ENCODE measurements at regions of chr11 and their contacts with region 1.

Region 1: GRCh38 chr11:101043940-101044339 is 85.7 kb downstream of the PGR start:
- DNase-seq: no peak
- H3K4me3 ChIP-seq: no peak overlapping the region
- H3K4me3 Mint-ChIP-seq: no peak overlapping the region
- H3K27ac ChIP-seq: no peak overlapping the region
- H3K27ac Mint-ChIP-seq: no peak overlapping the region
- H3K4me1 ChIP-seq: no peaks in the 10 kb centered on the region
- H3K4me1 Mint-ChIP-seq: no peaks in the 10 kb centered on the region
- H3K27me3 ChIP-seq: no peaks in the 10 kb centered on the region
- H3K27me3 Mint-ChIP-seq: no peaks in the 10 kb centered on the region

Region 2: GRCh38 chr11:100984668-100985067 is 59.3 kb before region 1 on chr11:
- CTCF ChIA-PET with region 1: no interaction called
- POLR2A ChIA-PET with region 1: interaction called, 12 read pairs
- DNase-seq: no peak
- H3K4me3 ChIP-seq: no peak overlapping the region
- H3K4me3 Mint-ChIP-seq: no peak overlapping the region
- H3K27ac ChIP-seq: no peak overlapping the region
- H3K27ac Mint-ChIP-seq: no peak overlapping the region
- H3K4me1 ChIP-seq: no peaks in the 10 kb centered on the region
- H3K4me1 Mint-ChIP-seq: no peaks in the 10 kb centered on the region
- H3K27me3 ChIP-seq: no peaks in the 10 kb centered on the region
- H3K27me3 Mint-ChIP-seq: no peaks in the 10 kb centered on the region

Region 3: DNA sequence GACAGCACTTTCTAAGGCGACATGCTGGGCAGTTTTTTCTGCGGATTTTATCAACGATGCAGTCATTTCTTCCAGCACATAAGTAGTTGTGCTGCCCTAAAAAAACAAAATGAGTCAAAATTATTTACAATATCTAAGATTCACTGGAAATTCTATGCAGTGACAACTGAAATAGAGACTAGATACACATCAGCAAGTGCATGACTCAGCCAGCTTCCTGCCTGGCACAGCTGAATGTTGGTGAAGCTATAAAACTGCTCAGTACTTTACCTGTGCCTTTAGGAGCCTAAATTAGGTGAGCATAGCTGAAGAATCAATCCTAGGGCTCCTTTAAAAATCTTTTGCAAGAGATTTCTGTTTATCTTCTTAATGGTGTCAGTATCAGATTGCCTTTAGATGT is 47.8 kb after region 1 on chr11:
- CTCF ChIA-PET with region 1: no interaction called
- POLR2A ChIA-PET with region 1: no interaction called
- DNase-seq: no peak
- H3K4me3 ChIP-seq: no peak overlapping the region
- H3K4me3 Mint-ChIP-seq: no peak overlapping the region
- H3K27ac ChIP-seq: no peak overlapping the region
- H3K27ac Mint-ChIP-seq: no peak overlapping the region
- H3K4me1 ChIP-seq: no peaks in the 10 kb centered on the region
- H3K4me1 Mint-ChIP-seq: no peaks in the 10 kb centered on the region
- H3K27me3 ChIP-seq: no peaks in the 10 kb centered on the region
- H3K27me3 Mint-ChIP-seq: no peaks in the 10 kb centered on the region